ENCODE measurements at regions of chr20 and their contacts with region 1.

Region 1: DNA sequence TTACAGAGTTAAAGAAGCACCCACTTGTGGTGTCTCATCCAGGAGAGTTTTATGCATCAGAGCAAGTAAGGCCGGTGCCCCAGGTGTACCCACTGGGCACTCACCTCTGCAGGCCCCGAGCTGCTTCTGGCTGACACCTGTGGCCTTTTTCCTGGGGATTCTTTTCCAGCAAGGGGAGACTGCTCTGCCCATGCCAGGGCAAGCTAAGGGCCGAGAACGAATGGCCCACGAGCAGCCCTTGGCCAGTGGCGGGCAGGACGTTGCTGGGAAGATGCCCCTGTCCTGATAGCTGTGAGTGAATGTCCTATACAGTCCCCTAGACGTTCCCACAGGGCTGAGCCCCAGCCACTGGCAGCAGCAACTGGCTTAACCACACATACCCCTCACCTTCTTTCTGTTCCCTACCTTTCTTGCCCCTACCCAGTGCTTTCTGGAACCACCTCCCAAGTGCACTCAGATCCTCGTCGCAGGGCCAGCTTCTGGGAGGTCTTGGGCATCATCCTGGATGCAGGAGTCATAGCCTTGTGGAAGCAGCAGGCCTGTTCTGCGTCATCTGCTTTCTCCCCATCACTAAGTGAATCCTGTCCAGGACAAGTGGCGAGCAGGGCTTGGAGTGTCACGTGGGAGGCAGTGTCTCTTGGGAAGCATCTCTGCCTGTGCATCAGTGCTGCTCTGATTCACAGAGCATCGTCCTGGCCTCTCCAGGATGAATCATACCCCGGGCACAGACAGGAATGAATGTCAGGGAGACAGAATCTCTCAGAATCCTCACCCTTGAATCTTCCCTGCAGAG is 32.5 kb downstream of the SYNDIG1 start:
- DNase-seq: peak; percentile 67 to 97 (median 80)

Region 2: DNA sequence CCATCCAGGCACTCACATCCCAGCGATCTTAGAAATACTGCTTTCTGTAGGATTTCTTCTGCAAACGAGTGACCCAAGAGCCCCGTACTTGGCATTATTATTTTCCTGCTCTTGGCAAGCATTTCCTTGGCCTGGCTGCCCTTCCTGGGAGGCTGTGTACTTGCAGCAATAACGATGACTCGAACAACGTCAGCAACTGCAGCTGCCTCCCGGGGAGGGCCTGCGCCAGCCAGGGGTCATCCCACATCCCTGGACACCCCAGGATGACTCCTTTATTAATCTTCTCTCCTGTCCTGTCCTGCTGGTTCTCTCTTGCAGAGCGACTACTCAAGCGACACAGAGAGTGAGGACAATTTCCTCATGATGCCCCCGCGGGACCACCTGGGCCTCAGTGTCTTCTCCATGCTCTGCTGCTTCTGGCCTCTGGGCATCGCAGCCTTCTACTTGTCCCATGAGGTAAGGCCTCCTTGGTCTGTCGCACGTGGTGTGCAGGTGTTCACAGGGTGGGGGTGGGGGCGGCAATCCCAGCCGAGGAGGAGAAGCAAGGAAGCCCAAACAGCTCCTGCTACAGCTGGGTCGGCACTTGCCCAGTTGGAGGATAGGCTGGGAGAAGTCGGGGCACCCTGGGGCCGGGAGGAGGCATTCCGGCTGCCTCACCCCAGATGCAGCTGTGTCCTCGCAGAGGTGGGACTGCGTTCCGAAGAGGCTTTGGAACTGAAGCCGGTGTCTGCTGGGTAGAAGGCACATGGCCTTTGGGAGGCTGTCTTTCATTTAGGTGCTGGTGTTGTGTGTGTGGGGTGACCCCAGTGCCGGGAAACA is 82.8 kb after region 1 on chr20:
- intact Hi-C with region 1: loop called (anchors 10 kb)
- DNase-seq: peak in 1 of 10 donors; percentile 40

Region 3: GRCh38 chr20:24634855-24635254 is 132.9 kb after region 1 on chr20:
- intact Hi-C with region 1: loop called (anchors 10 kb)
- DNase-seq: peak; percentile 52 to 96 (median 78)